Kidney (tissue), 22 donors: ENCODE measurements at regions of chr22 and their contacts with region 1.

Region 1: DNA sequence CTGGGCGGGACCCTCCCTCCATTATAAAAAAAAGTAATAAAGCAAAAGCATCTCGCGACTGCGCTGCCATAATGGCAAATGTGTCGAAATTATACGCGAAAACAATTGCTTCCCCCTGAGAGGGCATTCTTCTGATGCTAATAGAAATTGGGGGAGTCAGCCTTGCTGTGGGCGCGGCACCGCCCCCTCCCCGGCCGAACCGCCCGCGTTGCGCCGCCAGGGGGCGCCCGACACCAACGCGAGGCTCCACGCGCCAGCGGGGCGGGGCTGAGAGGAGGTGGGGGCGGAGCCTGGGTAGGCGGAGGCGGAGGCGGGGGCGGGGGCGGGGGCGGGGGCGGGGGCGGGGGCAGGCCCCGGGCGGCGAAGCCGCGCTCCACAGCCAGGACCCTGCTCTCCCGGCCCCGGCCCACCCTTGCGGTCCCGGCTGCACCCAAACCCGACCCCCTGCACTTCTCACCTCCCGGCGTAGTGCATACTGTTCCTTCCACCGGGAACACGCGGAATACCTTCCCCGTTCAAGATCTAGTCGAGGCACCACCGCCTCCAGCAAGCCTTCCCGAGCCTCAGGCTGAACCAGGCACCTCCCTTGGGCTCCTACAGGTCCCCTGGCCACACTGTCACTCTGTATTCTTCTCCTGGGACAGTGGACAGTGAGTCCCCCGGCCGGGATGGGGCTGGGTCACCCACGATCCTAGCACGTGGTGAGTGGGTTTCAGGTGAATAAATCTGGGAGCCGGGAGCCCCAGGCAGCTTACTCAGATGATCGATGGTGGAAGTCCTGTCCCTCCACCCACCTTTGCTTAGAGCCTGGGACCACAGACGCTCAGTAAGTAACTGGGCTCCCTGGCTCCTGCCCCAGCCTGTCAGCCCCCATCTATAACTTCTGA is 15.5 kb upstream of the UPK3A start:
- DNase-seq: peak; percentile 88 to 93 (median 92)
- H3K4me3 ChIP-seq: peak overlapping the region; percentile 47 to 71 (median 57)
- H3K27ac ChIP-seq: no peak overlapping the region
- H3K4me1 ChIP-seq: peaks cover 0 to 6% (median 3%) of the 10 kb centered on the region in 3 donors
- H3K27me3 ChIP-seq: no peaks in the 10 kb centered on the region
- CTCF ChIP-seq: peak; percentile 96

Region 2: DNA sequence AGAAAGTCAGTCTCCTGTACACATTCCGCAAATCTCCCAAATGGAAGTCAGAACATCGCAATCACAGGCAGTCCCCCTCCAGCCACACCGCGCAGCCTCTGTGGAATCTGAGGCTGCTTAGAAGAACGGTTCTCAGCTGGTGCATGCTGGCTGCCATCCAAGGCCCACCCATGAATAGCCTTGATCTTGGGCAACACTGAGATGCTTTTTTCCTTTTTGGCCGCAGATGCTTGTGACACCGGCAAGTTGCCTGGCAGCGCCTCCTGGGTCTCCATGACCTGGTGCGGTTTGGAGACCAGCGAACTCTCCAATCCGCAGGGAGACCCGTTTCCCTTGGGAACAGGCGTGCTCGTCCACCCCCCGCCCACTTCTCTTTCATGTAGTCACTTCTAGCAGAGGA is 233.0 kb before region 1 on chr22:
- intact Hi-C with region 1: no loop called
- DNase-seq: no peak
- H3K4me3 ChIP-seq: no peak overlapping the region
- H3K27ac ChIP-seq: no peak overlapping the region
- H3K4me1 ChIP-seq: no peaks in the 10 kb centered on the region
- H3K27me3 ChIP-seq: no peaks in the 10 kb centered on the region
- CTCF ChIP-seq: no peak

Region 3: DNA sequence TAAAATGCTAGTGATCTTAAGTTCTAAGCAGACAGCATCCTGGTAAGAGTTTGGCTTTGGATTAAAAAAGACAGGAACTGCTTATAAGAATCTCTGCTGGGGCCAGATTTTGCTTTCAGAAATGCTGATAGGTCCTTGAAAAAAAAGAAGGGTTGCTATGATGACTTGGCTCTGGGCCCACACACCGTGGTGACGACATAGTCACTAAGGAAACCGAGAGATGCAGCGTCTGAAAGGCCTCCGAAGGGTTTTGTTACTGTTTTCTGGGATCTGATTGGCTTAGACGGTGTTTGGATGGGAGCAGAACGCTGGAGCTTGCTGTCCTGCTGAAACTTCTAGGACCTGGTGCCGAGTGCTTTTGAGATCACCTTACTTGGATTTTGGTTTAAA is 49.0 kb after region 1 on chr22:
- intact Hi-C with region 1: no loop called
- DNase-seq: peak; percentile 69 to 92 (median 81)
- H3K4me3 ChIP-seq: no peak overlapping the region
- H3K27ac ChIP-seq: peak overlapping the region; percentile 65 to 78
- H3K4me1 ChIP-seq: peaks cover 0 to 2% (median 0%) of the 10 kb centered on the region in 3 donors
- H3K27me3 ChIP-seq: no peaks in the 10 kb centered on the region
- CTCF ChIP-seq: no peak

Region 4: GRCh38 chr22:45381348-45381747 is 112.1 kb after region 1 on chr22:
- intact Hi-C with region 1: no loop called
- DNase-seq: no peak
- H3K4me3 ChIP-seq: no peak overlapping the region
- H3K27ac ChIP-seq: no peak overlapping the region
- H3K4me1 ChIP-seq: no peaks in the 10 kb centered on the region
- H3K27me3 ChIP-seq: no peaks in the 10 kb centered on the region
- CTCF ChIP-seq: no peak

Region 5: DNA sequence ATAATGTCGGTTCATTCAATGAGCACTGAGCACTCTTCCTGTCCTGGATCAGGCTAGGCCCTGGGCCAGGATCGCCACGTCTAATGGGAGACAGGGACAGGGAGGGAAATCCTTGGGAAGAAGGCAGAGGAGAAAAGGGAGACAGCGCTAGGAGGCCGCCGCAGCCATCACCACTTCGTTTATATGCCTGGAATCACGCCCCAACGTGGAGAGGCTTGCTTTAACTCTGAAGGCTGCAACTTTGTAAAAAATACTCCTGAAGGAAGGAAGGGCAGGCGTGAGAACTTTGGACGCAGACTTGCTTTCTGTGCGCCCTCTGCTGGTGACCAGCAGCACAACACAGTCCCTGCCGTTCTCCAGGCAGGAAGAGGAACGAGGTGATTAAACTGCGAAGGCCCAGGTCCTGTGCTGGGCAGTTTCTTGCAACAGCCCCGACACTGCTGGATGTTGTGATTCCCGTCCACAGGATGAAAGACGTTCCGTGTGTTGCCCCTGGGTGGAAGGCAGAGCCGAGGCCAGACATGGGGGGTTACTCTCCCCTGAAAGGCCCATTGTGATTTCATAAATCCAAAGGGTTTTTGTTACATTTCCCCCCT is 166.4 kb after region 1 on chr22:
- intact Hi-C with region 1: loop called (anchors 5 kb)
- DNase-seq: peak; percentile 90 to 95 (median 93)
- H3K4me3 ChIP-seq: peak overlapping the region in 1 of 3 donors; percentile 46
- H3K27ac ChIP-seq: no peak overlapping the region
- H3K4me1 ChIP-seq: peaks cover 0 to 4% (median 0%) of the 10 kb centered on the region in 3 donors
- H3K27me3 ChIP-seq: no peaks in the 10 kb centered on the region
- CTCF ChIP-seq: peak; percentile 99

Region 6: DNA sequence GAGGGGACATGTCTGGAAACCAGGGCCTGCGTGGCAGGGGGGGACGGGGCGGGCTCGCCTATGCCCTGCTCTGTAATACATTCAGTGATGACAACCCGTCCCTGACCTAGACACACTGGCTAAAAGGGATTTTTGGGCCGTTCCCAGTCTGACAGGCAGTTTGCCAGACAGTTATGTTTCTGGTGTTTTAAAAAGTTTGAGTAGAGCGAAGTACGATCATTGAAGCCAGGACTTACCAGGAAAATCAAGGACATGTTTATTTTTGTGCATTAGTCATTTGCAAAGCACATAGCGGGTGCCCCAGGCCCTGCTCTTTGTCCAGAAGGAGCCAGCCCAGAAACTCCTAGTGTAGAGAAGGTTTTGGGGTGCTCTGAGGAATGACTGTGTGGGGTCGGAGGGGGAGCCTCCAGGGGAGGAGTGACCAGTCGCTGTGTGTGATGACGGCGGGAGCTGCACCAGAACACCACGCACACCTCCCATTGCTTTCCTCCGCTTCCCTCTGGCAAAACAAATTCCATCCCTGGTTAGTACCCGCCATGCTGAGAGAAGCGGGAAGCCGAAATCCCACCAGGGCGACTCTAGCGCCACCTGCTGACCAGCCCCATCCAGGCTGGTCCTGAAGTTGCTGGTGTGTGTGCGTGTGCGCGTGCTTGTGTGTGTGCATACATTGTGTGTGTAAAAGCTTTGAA is 284.3 kb after region 1 on chr22:
- intact Hi-C with region 1: loop called (anchors 10 kb)
- DNase-seq: peak; percentile 88 to 93 (median 89)
- H3K4me3 ChIP-seq: no peak overlapping the region
- H3K27ac ChIP-seq: peak overlapping the region; percentile 41 to 48
- H3K4me1 ChIP-seq: peaks cover 0 to 9% (median 3%) of the 10 kb centered on the region in 3 donors
- H3K27me3 ChIP-seq: no peaks in the 10 kb centered on the region
- CTCF ChIP-seq: peak; percentile 79